B cell (primary cell): ENCODE measurements at regions of chr12 and their contacts with region 1.

Region 1: GRCh38 chr12:98644711-98645402 is at the starts of genes APAF1 and IKBIP:
- DNase-seq: peak; percentile 98
- ATAC-seq: peak; percentile 88
- H3K4me3 ChIP-seq: peak within 1 kb of the TSS; percentile 84 to 99 (median 92)
- H3K4me3 Mint-ChIP-seq: peak within 1 kb of the TSS; percentile 96
- H3K27ac ChIP-seq: peak within 1 kb of the TSS; percentile 77 to 84
- H3K27ac Mint-ChIP-seq: peak within 1 kb of the TSS; percentile 98
- H3K4me1 ChIP-seq: peaks cover 13 to 14% of the 10 kb centered on the region in 2 donors
- H3K4me1 Mint-ChIP-seq: peaks cover 23% of the 10 kb centered on the region
- H3K27me3 ChIP-seq: no peaks in the 10 kb centered on the region
- H3K27me3 Mint-ChIP-seq: no peaks in the 10 kb centered on the region
- CTCF ChIP-seq: peak; percentile 1
- total RNA-seq, gene APAF1: 36.9 and 37.8 TPM in 2 replicates
- total RNA-seq, gene IKBIP: 12.0 TPM in 2 replicates

Region 2: DNA sequence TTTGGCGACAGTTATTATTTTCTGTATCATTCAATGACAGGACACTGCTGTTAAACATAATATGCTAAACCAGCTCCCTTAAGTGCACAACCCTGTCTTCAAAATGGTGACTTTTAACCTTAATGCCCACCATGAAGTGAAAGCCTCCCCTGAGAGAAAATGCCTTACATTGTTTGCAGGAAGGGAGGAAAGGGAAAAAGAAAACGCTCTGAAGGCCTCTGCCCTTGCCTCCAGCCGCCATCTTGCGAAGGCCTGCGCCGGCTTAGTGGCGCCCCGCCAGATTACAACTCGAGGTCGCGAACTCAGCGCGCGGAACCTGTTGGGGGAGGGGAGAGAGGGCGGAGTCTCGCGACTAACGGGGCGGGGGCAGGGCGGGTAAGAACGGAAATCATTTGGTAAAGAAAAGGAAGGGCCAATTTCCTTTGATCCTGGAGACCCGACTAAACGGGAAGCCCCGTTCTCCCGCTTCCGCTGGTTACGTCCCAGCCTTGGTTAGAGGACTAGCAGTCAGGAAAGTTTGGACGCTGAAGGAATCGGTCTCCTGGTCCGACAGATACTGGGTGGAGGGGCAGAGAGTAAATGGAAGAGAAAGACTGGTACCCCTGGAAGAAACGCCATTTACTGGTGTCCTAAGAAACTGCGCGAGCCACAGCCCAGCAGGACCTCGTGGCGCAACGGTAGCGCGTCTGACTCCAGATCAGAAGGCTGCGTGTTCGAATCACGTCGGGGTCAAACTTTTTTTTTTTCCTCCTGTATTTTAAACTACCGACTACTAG is 141.1 kb before region 1 on chr12:
- CTCF ChIA-PET with region 1: no interaction called
- POLR2A ChIA-PET with region 1: no interaction called
- intact Hi-C with region 1: loop called (anchors 1 kb)
- DNase-seq: peak; percentile 98
- ATAC-seq: peak; percentile 88
- H3K4me3 ChIP-seq: peak overlapping the region; percentile 75 to 96 (median 95)
- H3K4me3 Mint-ChIP-seq: peak overlapping the region; percentile 100
- H3K27ac ChIP-seq: peak overlapping the region; percentile 98 to 99
- H3K27ac Mint-ChIP-seq: peak overlapping the region; percentile 100
- H3K4me1 ChIP-seq: peaks cover 4 to 13% of the 10 kb centered on the region in 2 donors
- H3K4me1 Mint-ChIP-seq: peaks cover 23% of the 10 kb centered on the region
- H3K27me3 ChIP-seq: no peaks in the 10 kb centered on the region
- H3K27me3 Mint-ChIP-seq: peaks cover 3% of the 10 kb centered on the region
- CTCF ChIP-seq: no peak

Region 3: DNA sequence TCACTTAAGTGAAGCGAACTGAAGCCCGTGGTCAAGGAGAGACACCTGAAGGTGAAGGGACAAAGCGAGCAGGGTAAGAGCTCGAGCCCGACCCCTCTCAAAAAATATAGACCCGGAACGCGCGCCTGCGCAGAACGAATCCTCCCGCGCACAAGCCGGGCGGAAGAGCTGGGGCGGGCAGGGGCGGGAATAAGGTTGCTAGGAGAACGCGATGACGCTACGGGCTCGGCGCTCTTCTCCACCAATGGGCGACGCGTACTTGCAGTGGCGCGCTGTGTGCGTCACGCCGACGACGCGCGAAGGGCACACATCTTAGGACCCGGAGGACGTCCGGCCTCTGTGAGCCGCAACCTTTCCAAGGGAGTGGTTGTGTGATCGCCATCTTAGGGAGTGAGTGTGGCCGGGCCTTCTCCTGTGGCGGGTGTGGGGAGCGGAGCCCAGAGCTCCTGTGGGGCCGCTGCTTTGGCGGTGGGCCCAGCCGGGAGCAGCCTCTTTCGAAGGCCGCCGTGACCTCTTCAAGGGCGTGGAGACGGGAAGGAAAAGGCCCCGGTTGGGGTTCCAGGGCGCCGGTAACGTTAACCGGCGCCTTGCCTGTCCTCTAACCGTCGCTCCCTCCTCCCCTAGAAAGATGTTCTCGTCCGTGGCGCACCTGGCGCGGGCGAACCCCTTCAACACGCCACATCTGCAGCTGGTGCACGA is 51.4 kb before region 1 on chr12 and contains the start of gene SLC25A3:
- CTCF ChIA-PET with region 1: interaction called, 29 read pairs
- POLR2A ChIA-PET with region 1: interaction called, 21 read pairs
- intact Hi-C with region 1: loop called (anchors 1 kb)
- DNase-seq: peak; percentile 99
- ATAC-seq: peak; percentile 97
- H3K4me3 ChIP-seq: peak within 1 kb of the TSS; percentile 91 to 100 (median 96)
- H3K4me3 Mint-ChIP-seq: peak within 1 kb of the TSS; percentile 91
- H3K27ac ChIP-seq: peak within 1 kb of the TSS; percentile 96 to 98
- H3K27ac Mint-ChIP-seq: peak within 1 kb of the TSS; percentile 98
- H3K4me1 ChIP-seq: peaks cover 20 to 25% of the 10 kb centered on the region in 2 donors
- H3K4me1 Mint-ChIP-seq: peaks cover 34% of the 10 kb centered on the region
- H3K27me3 ChIP-seq: no peaks in the 10 kb centered on the region
- H3K27me3 Mint-ChIP-seq: no peaks in the 10 kb centered on the region
- CTCF ChIP-seq: no peak
- total RNA-seq, gene SLC25A3: 304 and 308 TPM in 2 replicates

Region 4: DNA sequence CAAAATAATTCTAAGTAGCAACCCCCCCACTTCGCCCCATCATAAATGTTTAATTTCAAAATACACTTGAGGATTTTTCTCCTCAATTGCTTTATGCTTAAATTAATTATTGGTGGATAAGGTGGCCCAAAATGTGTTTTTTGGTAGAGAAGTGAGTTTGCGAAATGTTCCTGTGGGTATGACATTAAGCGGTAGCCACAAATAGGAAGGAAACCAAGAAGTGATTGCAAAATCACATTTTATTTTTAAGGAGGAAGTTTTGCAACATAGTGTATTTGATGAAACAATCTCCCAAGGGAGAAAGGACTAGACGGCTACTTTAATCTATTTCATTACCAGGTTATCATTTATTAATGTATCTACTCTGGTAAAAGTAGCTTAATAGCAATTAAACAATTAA is 25.9 kb before region 1 on chr12:
- CTCF ChIA-PET with region 1: interaction called, 11 read pairs
- POLR2A ChIA-PET with region 1: interaction called, 10 read pairs
- intact Hi-C with region 1: no loop called
- DNase-seq: no peak
- ATAC-seq: no peak
- H3K4me3 ChIP-seq: no peak overlapping the region
- H3K4me3 Mint-ChIP-seq: no peak overlapping the region
- H3K27ac ChIP-seq: no peak overlapping the region
- H3K27ac Mint-ChIP-seq: no peak overlapping the region
- H3K4me1 ChIP-seq: peaks cover 4 to 6% of the 10 kb centered on the region in 2 donors
- H3K4me1 Mint-ChIP-seq: peaks cover 10% of the 10 kb centered on the region
- H3K27me3 ChIP-seq: no peaks in the 10 kb centered on the region
- H3K27me3 Mint-ChIP-seq: no peaks in the 10 kb centered on the region
- CTCF ChIP-seq: no peak